Activated CD8-positive, alpha-beta T cell treated with anti-CD3 and anti-CD28 coated beads for 36 hours (primary cell): ENCODE measurements at regions of chr15 and their contacts with region 1.

Region 1: DNA sequence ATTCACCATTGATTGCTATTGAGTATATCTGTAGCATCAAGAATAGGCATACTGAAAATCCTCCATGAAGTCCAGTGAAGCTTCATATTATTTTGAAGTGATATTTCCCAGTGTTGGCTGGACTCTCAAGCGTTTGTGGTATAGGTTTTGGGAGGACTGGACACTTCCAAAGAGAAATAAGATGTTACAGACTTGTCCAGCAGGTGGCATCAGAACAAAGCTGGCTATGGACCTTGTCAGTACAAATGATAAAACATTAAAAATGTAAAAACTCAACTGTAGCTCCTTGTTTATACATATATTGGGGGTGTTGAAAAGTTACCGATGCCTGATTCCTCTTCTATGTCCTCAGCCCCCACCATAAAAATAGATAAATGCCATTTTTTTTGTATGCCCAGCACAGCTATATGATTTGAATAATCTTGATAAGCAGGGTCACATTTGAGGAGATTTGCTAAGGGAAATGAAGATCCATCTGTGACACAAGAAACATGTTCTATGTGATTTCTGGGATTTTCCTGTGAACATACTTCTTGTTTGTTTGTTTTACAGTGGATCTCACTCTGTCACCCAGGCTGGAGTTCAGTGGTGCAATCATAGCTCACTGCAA is 54.5 kb upstream of the GOLGA6B start:
- DNase-seq: peak; percentile 50
- ATAC-seq: no peak
- H3K4me3 Mint-ChIP-seq: no peak overlapping the region
- H3K27ac Mint-ChIP-seq: no peak overlapping the region
- H3K4me1 Mint-ChIP-seq: no peaks in the 10 kb centered on the region
- H3K27me3 Mint-ChIP-seq: no peaks in the 10 kb centered on the region
- CTCF ChIP-seq: peak; percentile 83

Region 2: GRCh38 chr15:72312605-72313447 is 287.1 kb before region 1 on chr15:
- CTCF ChIA-PET with region 1: interaction called, 17 read pairs
- POLR2A ChIA-PET with region 1: no interaction called
- intact Hi-C with region 1: no loop called
- DNase-seq: peak; percentile 73
- ATAC-seq: peak; percentile 98
- H3K4me3 Mint-ChIP-seq: no peak overlapping the region
- H3K27ac Mint-ChIP-seq: no peak overlapping the region
- H3K4me1 Mint-ChIP-seq: no peaks in the 10 kb centered on the region
- H3K27me3 Mint-ChIP-seq: no peaks in the 10 kb centered on the region
- CTCF ChIP-seq: peak; percentile 90

Region 3: GRCh38 chr15:72585476-72586082 is 14.4 kb before region 1 on chr15:
- CTCF ChIA-PET with region 1: interaction called, 43 read pairs
- POLR2A ChIA-PET with region 1: no interaction called
- intact Hi-C with region 1: no loop called
- DNase-seq: no peak
- ATAC-seq: no peak
- H3K4me3 Mint-ChIP-seq: no peak overlapping the region
- H3K27ac Mint-ChIP-seq: no peak overlapping the region
- H3K4me1 Mint-ChIP-seq: no peaks in the 10 kb centered on the region
- H3K27me3 Mint-ChIP-seq: no peaks in the 10 kb centered on the region
- CTCF ChIP-seq: no peak

Region 4: GRCh38 chr15:72671535-72671934 is 71.6 kb after region 1 on chr15:
- CTCF ChIA-PET with region 1: interaction called, 28 read pairs
- POLR2A ChIA-PET with region 1: no interaction called
- intact Hi-C with region 1: loop called (anchors 10 kb)
- DNase-seq: no peak
- ATAC-seq: no peak
- H3K4me3 Mint-ChIP-seq: no peak overlapping the region
- H3K27ac Mint-ChIP-seq: no peak overlapping the region
- H3K4me1 Mint-ChIP-seq: peaks cover 5% of the 10 kb centered on the region
- H3K27me3 Mint-ChIP-seq: peaks cover 10% of the 10 kb centered on the region
- CTCF ChIP-seq: no peak